Activated T-helper 1 cell treated with anti-CD3 and anti-CD28 coated beads, Interleukin-12 subunit alpha, Interleukin-12 subunit beta, Interleukin-2, Interleukin-4 antibody, amounts not matched to agents 30 ng/mL and 10 ng/mL and 1 ng/mL, durations not matched to agents 14 hours and 24 hours and 36 hours (primary cell): ENCODE measurements at regions of chr4 and their contacts with region 1.

Region 1: GRCh38 chr4:105306158-105306781 is 159.6 kb downstream of the TET2 start:
- DNase-seq: peak; percentile 60
- H3K4me3 Mint-ChIP-seq: peak overlapping the region; percentile 41
- H3K27ac Mint-ChIP-seq: peak overlapping the region; percentile 92
- H3K4me1 Mint-ChIP-seq: peaks cover 25% of the 10 kb centered on the region
- H3K27me3 Mint-ChIP-seq: no peaks in the 10 kb centered on the region

Region 2: GRCh38 chr4:105140684-105141490 is 165.4 kb before region 1 on chr4:
- intact Hi-C with region 1: loop called (anchors 1 kb)
- DNase-seq: no peak
- H3K4me3 Mint-ChIP-seq: no peak overlapping the region
- H3K27ac Mint-ChIP-seq: no peak overlapping the region
- H3K4me1 Mint-ChIP-seq: peaks cover 21% of the 10 kb centered on the region
- H3K27me3 Mint-ChIP-seq: no peaks in the 10 kb centered on the region

Region 3: GRCh38 chr4:105191621-105192210 is 114.6 kb before region 1 on chr4:
- intact Hi-C with region 1: loop called (anchors 1 kb)
- DNase-seq: no peak
- H3K4me3 Mint-ChIP-seq: peak overlapping the region; percentile 8
- H3K27ac Mint-ChIP-seq: peak overlapping the region; percentile 74
- H3K4me1 Mint-ChIP-seq: peaks cover 53% of the 10 kb centered on the region
- H3K27me3 Mint-ChIP-seq: no peaks in the 10 kb centered on the region

Region 4: DNA sequence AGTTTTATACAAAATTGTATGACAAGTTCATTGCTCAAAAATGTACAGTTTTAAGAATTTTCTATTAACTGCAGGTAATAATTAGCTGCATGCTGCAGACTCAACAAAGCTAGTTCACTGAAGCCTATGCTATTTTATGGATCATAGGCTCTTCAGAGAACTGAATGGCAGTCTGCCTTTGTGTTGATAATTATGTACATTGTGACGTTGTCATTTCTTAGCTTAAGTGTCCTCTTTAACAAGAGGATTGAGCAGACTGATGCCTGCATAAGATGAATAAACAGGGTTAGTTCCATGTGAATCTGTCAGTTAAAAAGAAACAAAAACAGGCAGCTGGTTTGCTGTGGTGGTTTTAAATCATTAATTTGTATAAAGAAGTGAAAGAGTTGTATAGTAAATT is 28.6 kb before region 1 on chr4:
- intact Hi-C with region 1: loop called (anchors 2 kb)
- DNase-seq: no peak
- H3K4me3 Mint-ChIP-seq: no peak overlapping the region
- H3K27ac Mint-ChIP-seq: no peak overlapping the region
- H3K4me1 Mint-ChIP-seq: peaks cover 35% of the 10 kb centered on the region
- H3K27me3 Mint-ChIP-seq: no peaks in the 10 kb centered on the region

Region 5: DNA sequence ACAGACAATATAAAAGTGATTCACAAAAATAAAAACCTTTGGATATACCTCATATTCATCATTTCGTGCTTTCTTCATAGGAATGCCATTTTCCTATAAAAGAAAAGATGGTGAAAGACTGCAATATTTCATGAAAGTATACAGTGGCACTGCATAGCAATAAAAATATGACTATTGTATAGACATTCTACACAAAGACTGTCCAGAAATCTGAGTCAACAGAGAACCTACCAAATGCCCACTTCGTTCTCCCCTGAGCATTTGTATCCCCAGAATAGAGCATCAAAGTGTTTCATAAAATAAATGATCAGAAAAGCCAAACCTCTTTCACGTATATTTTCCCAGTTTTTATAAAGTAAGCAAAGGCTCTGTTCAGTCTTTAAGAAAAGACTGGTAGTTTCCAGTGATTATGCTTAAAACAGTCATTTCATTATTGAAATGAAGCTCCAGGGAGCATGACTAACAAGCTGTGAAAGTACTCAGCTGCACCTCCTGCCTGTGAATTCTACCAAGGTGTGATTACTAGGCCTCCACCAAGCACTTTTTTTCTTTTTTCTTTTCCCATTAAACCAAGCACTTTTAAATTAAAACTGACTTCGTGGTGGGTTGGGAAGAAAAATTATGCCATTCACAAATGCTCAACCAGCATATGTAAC is 147.4 kb after region 1 on chr4:
- intact Hi-C with region 1: loop called (anchors 1 kb)
- DNase-seq: no peak
- H3K4me3 Mint-ChIP-seq: no peak overlapping the region
- H3K27ac Mint-ChIP-seq: peak overlapping the region; percentile 45
- H3K4me1 Mint-ChIP-seq: peaks cover 33% of the 10 kb centered on the region
- H3K27me3 Mint-ChIP-seq: no peaks in the 10 kb centered on the region

Region 6: DNA sequence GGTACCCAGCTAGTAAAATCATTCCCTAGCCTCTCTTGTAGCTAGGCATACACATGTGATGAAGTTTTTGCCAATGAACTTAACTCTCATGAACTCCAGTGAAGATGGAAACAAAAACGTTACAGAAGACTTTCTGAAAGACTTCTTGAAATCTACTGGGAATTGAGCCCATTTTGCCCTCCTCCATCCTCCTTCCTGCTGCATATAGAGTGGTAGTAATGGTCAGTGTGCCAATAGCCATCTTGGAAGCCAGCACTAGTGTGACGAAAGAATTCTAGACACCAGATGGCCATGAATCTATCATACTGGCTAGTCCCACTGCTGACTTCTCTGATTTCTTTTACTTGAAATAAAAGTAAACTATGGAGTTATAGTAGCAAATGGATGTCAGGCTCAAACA is 198.5 kb after region 1 on chr4:
- intact Hi-C with region 1: no loop called
- DNase-seq: no peak
- H3K4me3 Mint-ChIP-seq: no peak overlapping the region
- H3K27ac Mint-ChIP-seq: no peak overlapping the region
- H3K4me1 Mint-ChIP-seq: no peaks in the 10 kb centered on the region
- H3K27me3 Mint-ChIP-seq: no peaks in the 10 kb centered on the region